Heart left ventricle (tissue), 16 donors: ENCODE measurements at regions of chr17 and their contacts with region 1.

Region 1: GRCh38 chr17:14926526-14927122 is 338.5 kb downstream of the PMP22 start:
- DNase-seq: peak in 3 of 5 donors; percentile 34 to 41 (median 35)
- ATAC-seq: no peak
- H3K4me3 ChIP-seq: no peak overlapping the region
- H3K27ac ChIP-seq: no peak overlapping the region
- H3K4me1 ChIP-seq: no peaks in the 10 kb centered on the region
- H3K27me3 ChIP-seq: peaks cover 0 to 16% (median 0%) of the 10 kb centered on the region in 9 donors
- CTCF ChIP-seq: peak; percentile 64 to 86 (median 76)
- POLR2A ChIP-seq: no peak

Region 2: GRCh38 chr17:13114601-13115031 is 1812.0 kb before region 1 on chr17:
- intact Hi-C with region 1: loop called in 1 of 10 experiments (anchors 10 kb)
- DNase-seq: peak in 4 of 5 donors; percentile 12 to 35 (median 24)
- ATAC-seq: peak in 3 of 4 donors; percentile 69 to 88 (median 80)
- H3K4me3 ChIP-seq: peak overlapping the region in 2 of 12 donors; percentile 10 to 26
- H3K27ac ChIP-seq: no peak overlapping the region
- H3K4me1 ChIP-seq: peaks cover 0 to 4% (median 0%) of the 10 kb centered on the region in 12 donors
- H3K27me3 ChIP-seq: peaks cover 0 to 16% (median 5%) of the 10 kb centered on the region in 9 donors
- CTCF ChIP-seq: peak; percentile 47 to 79 (median 56)
- POLR2A ChIP-seq: no peak

Region 3: GRCh38 chr17:13337864-13338371 is 1588.7 kb before region 1 on chr17:
- intact Hi-C with region 1: loop called in 3 of 10 experiments (anchors 10 kb)
- DNase-seq: peak in 2 of 5 donors; percentile 20 to 23
- ATAC-seq: peak; percentile 20 to 57 (median 42)
- H3K4me3 ChIP-seq: peak overlapping the region in 10 of 12 donors; percentile 14 to 50 (median 42)
- H3K27ac ChIP-seq: peak overlapping the region in 3 of 12 donors; percentile 12 to 61 (median 22)
- H3K4me1 ChIP-seq: peaks cover 0 to 5% (median 0%) of the 10 kb centered on the region in 12 donors
- H3K27me3 ChIP-seq: peaks cover 0 to 3% (median 0%) of the 10 kb centered on the region in 9 donors
- CTCF ChIP-seq: peak; percentile 54 to 81 (median 71)
- POLR2A ChIP-seq: no peak

Region 4: DNA sequence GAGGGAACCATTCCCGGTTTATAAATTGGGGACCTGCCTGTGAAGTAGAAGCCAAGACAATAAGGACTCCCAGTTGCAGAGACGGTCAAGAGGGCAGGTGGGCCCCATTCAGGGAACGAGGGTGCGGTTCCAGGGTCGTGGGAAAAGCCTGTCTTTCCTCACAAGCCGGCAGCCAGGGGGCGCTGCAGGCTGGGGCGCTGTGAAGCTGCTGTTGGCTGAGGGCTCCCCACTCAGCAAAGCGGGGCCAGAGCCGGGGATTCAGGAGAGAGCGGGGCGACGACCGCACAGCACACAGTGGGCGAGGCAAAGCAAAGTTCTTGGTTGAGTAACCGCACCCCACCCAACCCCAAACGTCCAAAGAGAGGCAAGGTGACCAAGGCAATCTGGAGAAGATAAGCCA is 714.8 kb before region 1 on chr17:
- intact Hi-C with region 1: loop called in 2 of 10 experiments (anchors 10 kb)
- DNase-seq: peak in 4 of 5 donors; percentile 25 to 70 (median 42)
- ATAC-seq: peak in 2 of 4 donors; percentile 12 to 32
- H3K4me3 ChIP-seq: no peak overlapping the region
- H3K27ac ChIP-seq: no peak overlapping the region
- H3K4me1 ChIP-seq: peaks cover 0 to under 1% (median 0%) of the 10 kb centered on the region in 12 donors
- H3K27me3 ChIP-seq: no peaks in the 10 kb centered on the region
- CTCF ChIP-seq: peak in 11 of 12 donors; percentile 27 to 60 (median 42)
- POLR2A ChIP-seq: no peak

Region 5: DNA sequence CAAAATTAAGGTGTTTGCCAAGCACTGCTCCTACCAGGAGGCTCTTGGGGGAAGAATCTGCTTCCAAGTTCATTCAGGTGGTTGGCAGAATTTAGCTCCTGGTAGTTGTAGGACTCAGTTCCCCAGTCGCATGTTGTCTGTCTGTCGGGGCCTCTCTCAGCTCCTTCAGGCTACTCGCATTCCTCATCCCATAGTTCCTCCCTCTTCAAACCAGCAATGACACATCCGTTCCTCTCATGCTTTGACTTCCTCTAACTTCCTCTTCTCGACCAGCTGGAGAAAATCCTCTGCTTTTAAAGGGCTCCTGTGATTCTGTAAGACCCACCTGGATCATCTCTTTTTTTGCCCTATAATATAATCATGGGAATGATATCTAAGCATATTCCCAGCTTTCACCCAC is 230.4 kb after region 1 on chr17:
- intact Hi-C with region 1: loop called in 5 of 10 experiments (anchors 10 kb)
- DNase-seq: no peak
- ATAC-seq: no peak
- H3K4me3 ChIP-seq: no peak overlapping the region
- H3K27ac ChIP-seq: no peak overlapping the region
- H3K4me1 ChIP-seq: peaks cover 0 to 4% (median 0%) of the 10 kb centered on the region in 12 donors
- H3K27me3 ChIP-seq: peaks cover 0 to 5% (median 0%) of the 10 kb centered on the region in 9 donors
- CTCF ChIP-seq: no peak
- POLR2A ChIP-seq: no peak